Activated T-helper 1 cell treated with anti-CD3 and anti-CD28 coated beads, Interleukin-12 subunit alpha, Interleukin-12 subunit beta, Interleukin-2, Interleukin-4 antibody, amounts not matched to agents 30 ng/mL and 10 ng/mL and 1 ng/mL, durations not matched to agents 14 hours and 24 hours and 36 hours (primary cell): ENCODE measurements at regions of chr1 and their contacts with region 1.

Region 1: DNA sequence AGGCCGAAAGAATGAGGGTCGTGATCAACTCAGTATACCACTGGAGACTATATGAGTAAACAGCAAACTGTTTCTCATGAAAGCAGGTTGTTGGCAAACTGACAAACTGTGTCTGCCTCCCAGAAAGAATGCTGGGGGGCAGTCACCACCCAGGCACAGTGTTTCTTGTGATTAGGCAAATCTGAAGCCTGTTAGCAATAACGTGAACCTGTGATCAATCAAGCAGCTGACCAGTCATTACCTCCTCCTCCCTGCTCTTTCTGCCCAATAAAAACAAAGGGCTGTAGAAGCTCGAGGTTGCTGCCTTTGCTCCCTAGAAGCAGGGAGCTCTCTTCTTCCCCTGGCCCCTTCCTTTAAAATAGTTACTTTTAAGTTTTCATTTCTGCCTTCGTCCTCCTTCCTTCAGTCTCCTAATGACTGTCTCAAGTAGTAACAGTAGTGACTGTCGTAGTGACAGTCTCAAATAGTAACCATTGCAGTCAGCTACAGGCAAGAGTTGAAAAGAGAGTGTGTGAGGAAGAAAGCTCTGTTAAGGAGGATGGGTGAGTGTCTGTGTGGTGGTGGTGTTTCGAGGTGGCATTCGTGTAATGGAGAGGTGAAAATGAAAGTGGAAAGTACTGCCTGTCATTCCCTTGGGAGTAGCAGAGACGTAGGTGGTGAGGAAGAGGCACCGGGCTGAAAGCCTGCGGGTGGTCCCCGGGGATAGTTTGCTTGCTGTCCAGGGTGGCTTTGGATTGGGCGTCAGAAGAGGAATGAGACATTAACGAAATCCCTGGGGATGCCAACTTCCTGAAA is 14.5 kb downstream of the HHAT start:
- DNase-seq: no peak
- H3K4me3 Mint-ChIP-seq: no peak overlapping the region
- H3K27ac Mint-ChIP-seq: no peak overlapping the region
- H3K4me1 Mint-ChIP-seq: peaks cover 29% of the 10 kb centered on the region
- H3K27me3 Mint-ChIP-seq: peaks cover 9% of the 10 kb centered on the region

Region 2: DNA sequence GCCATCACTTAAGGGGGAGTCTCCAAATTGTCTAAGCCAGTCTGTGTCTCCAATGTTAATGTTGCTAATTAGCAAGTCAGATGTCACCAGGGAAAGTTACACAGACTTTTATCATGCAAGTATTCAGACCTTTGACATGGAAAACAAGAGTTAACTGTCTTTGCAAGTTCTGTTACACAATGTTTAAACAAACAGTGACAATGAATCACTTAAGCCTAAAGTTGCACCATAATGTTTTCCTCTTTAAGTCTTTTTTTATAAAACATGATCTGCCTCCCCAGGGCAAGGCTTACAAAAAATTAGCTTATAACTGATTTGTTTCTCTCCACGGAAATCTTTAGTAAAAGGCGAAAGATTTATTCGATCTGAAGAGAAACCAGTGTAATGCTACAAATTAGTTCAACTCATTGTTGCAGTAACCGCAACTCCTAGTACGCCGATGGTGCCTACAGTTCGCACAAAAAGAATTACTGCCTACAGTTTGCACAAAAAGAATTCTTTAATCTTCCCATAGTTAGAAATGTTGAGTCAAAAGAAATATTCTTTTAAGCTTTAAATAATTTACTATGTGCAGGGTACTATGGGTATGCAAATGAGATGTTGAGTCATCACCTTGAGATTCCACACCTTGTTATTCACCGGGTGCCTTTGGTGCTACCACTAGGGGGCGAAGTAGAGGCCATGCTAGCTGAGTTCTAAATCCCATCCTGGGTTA is 30.9 kb after region 1 on chr1:
- intact Hi-C with region 1: loop called (anchors 1 kb)
- DNase-seq: peak; percentile 57
- H3K4me3 Mint-ChIP-seq: no peak overlapping the region
- H3K27ac Mint-ChIP-seq: peak overlapping the region; percentile 62
- H3K4me1 Mint-ChIP-seq: peaks cover 19% of the 10 kb centered on the region
- H3K27me3 Mint-ChIP-seq: peaks cover 5% of the 10 kb centered on the region